Naive thymus-derived CD8-positive, alpha-beta T cell (primary cell): ENCODE measurements at regions of chr6 and their contacts with region 1.

Region 1: GRCh38 chr6:90186637-90187371 is 109.8 kb downstream of the BACH2 start:
- DNase-seq: peak in 7 of 10 donors; percentile 36 to 77 (median 45)
- ATAC-seq: peak; percentile 73 to 86
- H3K4me3 Mint-ChIP-seq: peak overlapping the region; percentile 54 to 89 (median 79)
- H3K27ac Mint-ChIP-seq: peak overlapping the region; percentile 93 to 100 (median 98)
- H3K4me1 Mint-ChIP-seq: peaks cover 36 to 92% (median 81%) of the 10 kb centered on the region in 4 donors
- H3K27me3 Mint-ChIP-seq: no peaks in the 10 kb centered on the region

Region 2: DNA sequence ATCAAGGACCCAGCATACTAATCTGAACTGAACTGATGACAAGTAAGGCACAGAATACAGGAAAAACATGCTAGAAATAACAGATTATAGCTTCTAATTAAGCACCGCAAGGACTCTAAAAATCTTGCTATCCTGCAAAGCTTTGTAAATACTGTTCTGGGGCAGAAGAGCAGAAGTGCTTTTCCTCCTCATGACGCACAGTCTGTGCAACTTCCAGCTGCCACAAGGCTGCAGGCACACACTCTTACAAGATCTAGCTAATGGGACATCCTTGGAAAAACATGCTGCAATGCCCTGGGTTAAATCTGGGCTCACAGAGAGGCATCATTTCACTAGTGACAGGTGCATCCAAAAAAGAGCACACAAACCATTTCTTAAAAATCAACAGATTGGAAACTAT is 104.0 kb before region 1 on chr6:
- POLR2A ChIA-PET with region 1: interaction called, 12 read pairs
- DNase-seq: no peak
- ATAC-seq: no peak
- H3K4me3 Mint-ChIP-seq: peak overlapping the region in 9 of 10 donors; percentile 41 to 80 (median 58)
- H3K27ac Mint-ChIP-seq: peak overlapping the region; percentile 74 to 98 (median 94)
- H3K4me1 Mint-ChIP-seq: peaks cover 39 to 93% (median 85%) of the 10 kb centered on the region in 4 donors
- H3K27me3 Mint-ChIP-seq: no peaks in the 10 kb centered on the region

Region 3: GRCh38 chr6:90263633-90264032 is 76.8 kb after region 1 on chr6:
- POLR2A ChIA-PET with region 1: interaction called, 15 read pairs
- DNase-seq: no peak
- ATAC-seq: no peak
- H3K4me3 Mint-ChIP-seq: peak overlapping the region in 6 of 10 donors; percentile 28 to 70 (median 48)
- H3K27ac Mint-ChIP-seq: peak overlapping the region; percentile 14 to 99 (median 92)
- H3K4me1 Mint-ChIP-seq: peaks cover 43 to 96% (median 94%) of the 10 kb centered on the region in 4 donors
- H3K27me3 Mint-ChIP-seq: no peaks in the 10 kb centered on the region